ENCODE measurements at regions of chr18 and their contacts with region 1.

Region 1: DNA sequence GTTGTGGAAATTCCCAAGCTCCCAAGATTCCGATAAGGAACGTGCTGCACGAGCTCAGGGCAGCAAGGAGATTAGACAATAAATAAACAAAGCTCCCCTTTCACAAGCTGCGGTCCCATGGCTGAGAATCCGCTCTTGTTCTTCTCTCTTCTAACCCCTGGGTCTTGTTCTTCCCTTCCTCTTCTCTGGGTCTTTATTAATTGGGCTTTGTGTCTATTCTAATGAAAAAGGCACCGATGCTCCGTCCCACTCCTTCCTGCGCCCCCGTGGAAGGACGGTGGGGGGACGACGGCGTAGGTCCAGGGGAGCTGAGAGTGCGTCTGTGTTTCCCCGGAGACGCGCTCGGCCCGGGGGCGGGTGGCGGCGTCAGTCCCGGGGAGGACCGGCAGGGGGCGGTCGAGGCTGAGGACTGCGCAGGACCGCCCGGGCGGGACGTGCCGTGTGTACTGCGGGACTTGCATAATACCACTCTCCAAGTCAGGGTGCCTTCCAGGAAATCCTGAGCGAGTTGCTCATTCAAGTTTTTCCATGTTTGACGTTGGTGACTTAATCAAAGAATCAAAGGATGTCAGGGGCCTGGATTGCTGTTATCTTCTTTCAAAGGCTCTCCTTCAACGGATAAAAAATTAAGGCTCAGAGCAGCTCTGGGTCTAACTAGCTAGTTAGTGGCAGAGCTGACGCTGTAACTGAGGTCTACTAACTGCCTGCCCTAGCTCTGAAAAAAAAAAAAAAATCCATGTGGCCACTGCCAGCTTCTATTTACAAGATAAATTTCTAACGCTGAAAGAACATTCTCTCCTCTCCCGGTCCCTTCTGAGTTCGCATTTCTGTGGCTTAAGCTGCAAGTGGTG is 321.4 kb downstream of the TGIF1 start:
- DNase-seq: peak; percentile 83
- H3K4me3 ChIP-seq: peak overlapping the region; percentile 48
- H3K27ac ChIP-seq: no peak overlapping the region
- H3K27me3 ChIP-seq: no peaks in the 10 kb centered on the region
- CTCF ChIP-seq: peak; percentile 77

Region 2: DNA sequence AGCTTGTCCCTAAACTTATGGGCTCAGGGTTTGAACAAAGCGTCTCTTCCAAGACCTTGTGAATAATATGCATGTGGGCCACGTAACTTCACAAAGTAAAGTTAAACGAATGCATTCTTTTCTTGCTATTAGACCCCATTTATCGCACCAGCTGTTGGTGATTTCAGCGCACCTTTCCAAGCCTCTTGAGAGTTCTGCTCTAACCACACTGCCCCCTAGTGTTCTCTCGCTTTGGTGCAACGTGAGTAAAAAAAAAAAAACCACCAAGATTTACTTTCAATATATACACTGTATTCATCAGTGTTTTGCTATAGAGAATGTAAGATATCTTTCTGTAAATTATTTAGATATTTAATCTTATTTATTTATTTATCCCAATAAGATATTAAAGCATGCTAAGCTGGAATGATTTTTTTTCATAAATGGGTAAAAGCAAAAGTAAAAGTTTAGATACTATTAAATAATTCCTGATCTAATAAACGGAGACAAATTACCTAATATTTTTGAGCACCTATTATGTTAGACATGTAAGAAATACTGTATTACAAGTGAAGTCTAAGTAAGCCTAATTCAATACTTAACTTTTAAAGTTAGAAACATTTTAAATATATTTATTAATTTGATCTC is 224.2 kb after region 1 on chr18:
- in situ Hi-C with region 1: loop called (anchors 25 kb)
- DNase-seq: peak; percentile 33
- H3K4me3 ChIP-seq: no peak overlapping the region
- H3K27ac ChIP-seq: no peak overlapping the region
- H3K27me3 ChIP-seq: no peaks in the 10 kb centered on the region
- CTCF ChIP-seq: peak; percentile 86

Measured in brain microvascular endothelial cell (primary cell).